Spleen (tissue), 13 donors: ENCODE measurements at regions of chr17 and their contacts with region 1.

Region 1: GRCh38 chr17:76868176-76868668 is at the start of gene MGAT5B:
- DNase-seq: peak; percentile 94
- H3K4me3 ChIP-seq: peak within 1 kb of the TSS; percentile 15 to 68 (median 36)
- H3K27ac ChIP-seq: no peak within 1 kb of the TSS
- H3K4me1 ChIP-seq: peaks cover 0 to 33% (median 22%) of the 10 kb centered on the region in 6 donors
- H3K27me3 ChIP-seq: peaks cover 8 to 83% (median 35%) of the 10 kb centered on the region in 7 donors
- CTCF ChIP-seq: peak; percentile 44 to 96 (median 91)
- POLR2A ChIP-seq: no peak
- total RNA-seq, gene MGAT5B: 0.26 to 2.0 (median 1.1) TPM

Region 2: DNA sequence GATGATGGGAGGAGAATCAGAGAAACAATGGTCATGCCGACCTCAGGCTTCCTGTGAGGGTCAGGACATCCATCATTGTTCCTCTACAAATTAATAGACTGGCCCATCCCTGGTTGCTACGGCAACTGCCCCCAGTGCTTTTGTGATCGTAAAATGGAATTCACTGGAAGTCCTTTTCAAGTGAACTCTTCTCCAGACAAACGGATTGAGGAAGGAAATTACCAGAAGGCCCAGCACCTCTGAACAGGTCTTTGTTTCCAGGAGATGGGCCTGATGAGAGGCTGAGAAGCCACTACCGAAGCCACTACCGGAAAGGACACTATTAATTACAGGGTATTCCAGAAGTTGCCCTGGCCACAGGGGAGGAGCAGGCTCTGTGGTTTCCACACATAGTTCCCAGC is 126.0 kb after region 1 on chr17:
- intact Hi-C with region 1: no loop called
- DNase-seq: no peak
- H3K4me3 ChIP-seq: no peak overlapping the region
- H3K27ac ChIP-seq: no peak overlapping the region
- H3K4me1 ChIP-seq: peaks cover 0 to 36% (median 22%) of the 10 kb centered on the region in 6 donors
- H3K27me3 ChIP-seq: peaks cover 0 to 22% (median 0%) of the 10 kb centered on the region in 7 donors
- CTCF ChIP-seq: no peak
- POLR2A ChIP-seq: no peak

Region 3: GRCh38 chr17:77054936-77055335 is 186.7 kb after region 1 on chr17:
- intact Hi-C with region 1: loop called (anchors 5 kb)
- DNase-seq: no peak
- H3K4me3 ChIP-seq: no peak overlapping the region
- H3K27ac ChIP-seq: no peak overlapping the region
- H3K4me1 ChIP-seq: peaks cover 0 to 6% (median 0%) of the 10 kb centered on the region in 6 donors
- H3K27me3 ChIP-seq: peaks cover 0 to 97% (median 10%) of the 10 kb centered on the region in 7 donors
- CTCF ChIP-seq: no peak
- POLR2A ChIP-seq: no peak

Region 4: GRCh38 chr17:77068915-77069314 is 200.7 kb after region 1 on chr17:
- intact Hi-C with region 1: loop called (anchors 5 kb)
- DNase-seq: no peak
- H3K4me3 ChIP-seq: no peak overlapping the region
- H3K27ac ChIP-seq: no peak overlapping the region
- H3K4me1 ChIP-seq: peaks cover 0 to 3% (median 0%) of the 10 kb centered on the region in 6 donors
- H3K27me3 ChIP-seq: peaks cover 0 to 50% (median 0%) of the 10 kb centered on the region in 7 donors
- CTCF ChIP-seq: no peak
- POLR2A ChIP-seq: no peak

Region 5: GRCh38 chr17:77247048-77247541 is 378.9 kb after region 1 on chr17:
- intact Hi-C with region 1: loop called (anchors 10 kb)
- DNase-seq: peak; percentile 97
- H3K4me3 ChIP-seq: peak overlapping the region; percentile 29 to 74 (median 42)
- H3K27ac ChIP-seq: peak overlapping the region in 6 of 8 donors; percentile 38 to 75 (median 61)
- H3K4me1 ChIP-seq: peaks cover 4 to 18% (median 14%) of the 10 kb centered on the region in 6 donors
- H3K27me3 ChIP-seq: peaks cover 0 to 28% (median 0%) of the 10 kb centered on the region in 7 donors
- CTCF ChIP-seq: peak; percentile 89 to 100 (median 98)
- POLR2A ChIP-seq: no peak